ENCODE measurements at regions of chr6 and their contacts with region 1.

Region 1: DNA sequence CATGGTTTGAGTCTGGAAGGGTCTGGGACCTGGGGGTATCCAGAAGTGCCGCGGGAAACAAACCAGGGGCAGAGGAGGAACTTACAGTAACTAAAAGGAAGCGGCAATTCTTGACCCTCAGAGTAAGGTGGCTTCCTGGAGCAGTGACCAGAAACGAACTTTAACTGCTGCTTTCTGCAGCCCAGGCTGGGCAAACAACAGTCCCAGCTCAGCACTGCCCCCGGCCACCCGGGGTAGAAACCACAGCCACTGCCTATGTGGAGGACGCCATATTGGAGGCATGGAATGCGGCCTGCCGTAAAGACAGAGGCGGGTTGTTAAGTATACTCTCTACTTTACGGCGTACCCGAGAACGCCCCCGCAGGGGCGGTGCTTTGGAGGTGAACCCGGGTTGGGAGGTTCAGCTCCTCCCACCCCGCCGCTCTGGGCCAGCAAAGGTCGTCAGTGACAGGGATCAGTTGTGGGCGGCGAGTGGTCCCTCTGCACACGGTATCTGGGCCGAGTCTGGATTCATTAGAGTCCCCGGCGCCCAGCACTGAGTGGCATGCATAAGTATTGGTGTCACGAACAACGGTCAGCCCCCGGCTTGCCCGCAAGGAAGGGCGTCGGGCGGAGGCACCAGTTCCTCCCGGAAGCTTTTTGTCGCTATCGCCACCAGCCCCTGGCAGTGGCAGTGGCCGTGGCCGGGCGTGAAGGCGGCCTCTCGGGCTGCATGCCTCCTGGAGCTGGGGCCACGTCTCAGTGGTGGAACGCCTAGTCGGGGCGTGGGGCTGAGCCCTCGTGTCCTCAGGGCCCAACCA is at the start of gene PDSS2:
- DNase-seq: peak; percentile 85 to 98 (median 95)
- ATAC-seq: peak; percentile 92 to 94
- H3K4me3 Mint-ChIP-seq: peak within 1 kb of the TSS; percentile 92 to 99 (median 98)
- H3K27ac Mint-ChIP-seq: peak within 1 kb of the TSS; percentile 96 to 98 (median 97)
- H3K4me1 Mint-ChIP-seq: peaks cover 13 to 31% (median 27%) of the 10 kb centered on the region in 4 donors
- H3K27me3 Mint-ChIP-seq: no peaks in the 10 kb centered on the region
- polyA plus RNA-seq, gene PDSS2: 11.1 to 13.9 (median 12.3) TPM

Region 2: GRCh38 chr6:107345393-107345792 is 114.1 kb before region 1 on chr6:
- POLR2A ChIA-PET with region 1: no interaction called
- DNase-seq: no peak
- ATAC-seq: no peak
- H3K4me3 Mint-ChIP-seq: no peak overlapping the region
- H3K27ac Mint-ChIP-seq: no peak overlapping the region
- H3K4me1 Mint-ChIP-seq: peaks cover 0 to 5% (median under 1%) of the 10 kb centered on the region in 4 donors
- H3K27me3 Mint-ChIP-seq: no peaks in the 10 kb centered on the region

Region 3: GRCh38 chr6:107489636-107490565 is 30.4 kb after region 1 on chr6 and contains the start of gene SOBP:
- POLR2A ChIA-PET with region 1: interaction called, 28 read pairs
- DNase-seq: peak in 9 of 10 donors; percentile 11 to 78 (median 48)
- ATAC-seq: peak; percentile 65 to 68
- H3K4me3 Mint-ChIP-seq: peak within 1 kb of the TSS; percentile 86 to 100 (median 96)
- H3K27ac Mint-ChIP-seq: peak within 1 kb of the TSS in 6 of 10 donors; percentile 27 to 95 (median 84)
- H3K4me1 Mint-ChIP-seq: peaks cover 11 to 32% (median 23%) of the 10 kb centered on the region in 4 donors
- H3K27me3 Mint-ChIP-seq: peaks cover 30 to 42% (median 38%) of the 10 kb centered on the region in 5 donors
- polyA plus RNA-seq, gene SOBP: 0.05 to 0.39 (median 0.08) TPM

Region 4: DNA sequence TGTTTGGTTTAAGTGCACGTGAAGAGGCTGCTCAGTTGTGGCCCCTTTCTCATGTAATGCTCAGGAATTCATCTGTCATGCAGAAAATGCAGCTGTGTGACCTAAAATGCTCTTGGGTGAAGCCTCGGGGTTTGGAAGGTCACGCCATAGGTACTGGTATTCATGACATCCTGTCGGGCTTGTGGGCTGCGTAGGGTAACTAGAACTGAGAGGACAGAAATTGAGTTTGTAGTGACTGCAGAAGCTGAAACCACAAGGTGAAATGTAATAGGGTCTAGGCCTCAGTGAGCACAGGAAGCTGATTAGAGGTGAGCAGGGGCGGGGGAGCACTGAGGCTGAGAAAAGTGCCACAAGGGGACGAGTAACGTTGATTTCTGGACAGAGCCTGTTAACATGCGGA is 159.2 kb after region 1 on chr6:
- POLR2A ChIA-PET with region 1: interaction called, 13 read pairs
- DNase-seq: peak in 9 of 10 donors; percentile 2 to 79 (median 61)
- ATAC-seq: peak; percentile 96 to 97
- H3K4me3 Mint-ChIP-seq: peak overlapping the region; percentile 5 to 75 (median 62)
- H3K27ac Mint-ChIP-seq: peak overlapping the region; percentile 70 to 96 (median 87)
- H3K4me1 Mint-ChIP-seq: peaks cover 33 to 42% (median 39%) of the 10 kb centered on the region in 4 donors
- H3K27me3 Mint-ChIP-seq: no peaks in the 10 kb centered on the region

Region 5: GRCh38 chr6:107657755-107658461 is 198.4 kb after region 1 on chr6:
- POLR2A ChIA-PET with region 1: interaction called, 14 read pairs
- DNase-seq: peak in 7 of 10 donors; percentile 24 to 83 (median 47)
- ATAC-seq: peak; percentile 85 to 91
- H3K4me3 Mint-ChIP-seq: peak overlapping the region; percentile 70 to 87 (median 82)
- H3K27ac Mint-ChIP-seq: peak overlapping the region; percentile 80 to 95 (median 90)
- H3K4me1 Mint-ChIP-seq: peaks cover 10 to 56% (median 38%) of the 10 kb centered on the region in 4 donors
- H3K27me3 Mint-ChIP-seq: no peaks in the 10 kb centered on the region

Measured in naive thymus-derived CD8-positive, alpha-beta T cell (primary cell).